Vagina (tissue), 2 donors: ENCODE measurements at regions of chr18 and their contacts with region 1.

Region 1: GRCh38 chr18:9849407-9850281 is 36.1 kb upstream of the TXNDC2 start:
- DNase-seq: no peak
- H3K4me3 ChIP-seq: no peak overlapping the region
- H3K27ac ChIP-seq: peak overlapping the region; percentile 36
- H3K4me1 ChIP-seq: peaks cover 63% of the 10 kb centered on the region
- H3K27me3 ChIP-seq: no peaks in the 10 kb centered on the region
- CTCF ChIP-seq: no peak
- POLR2A ChIP-seq: no peak

Region 2: DNA sequence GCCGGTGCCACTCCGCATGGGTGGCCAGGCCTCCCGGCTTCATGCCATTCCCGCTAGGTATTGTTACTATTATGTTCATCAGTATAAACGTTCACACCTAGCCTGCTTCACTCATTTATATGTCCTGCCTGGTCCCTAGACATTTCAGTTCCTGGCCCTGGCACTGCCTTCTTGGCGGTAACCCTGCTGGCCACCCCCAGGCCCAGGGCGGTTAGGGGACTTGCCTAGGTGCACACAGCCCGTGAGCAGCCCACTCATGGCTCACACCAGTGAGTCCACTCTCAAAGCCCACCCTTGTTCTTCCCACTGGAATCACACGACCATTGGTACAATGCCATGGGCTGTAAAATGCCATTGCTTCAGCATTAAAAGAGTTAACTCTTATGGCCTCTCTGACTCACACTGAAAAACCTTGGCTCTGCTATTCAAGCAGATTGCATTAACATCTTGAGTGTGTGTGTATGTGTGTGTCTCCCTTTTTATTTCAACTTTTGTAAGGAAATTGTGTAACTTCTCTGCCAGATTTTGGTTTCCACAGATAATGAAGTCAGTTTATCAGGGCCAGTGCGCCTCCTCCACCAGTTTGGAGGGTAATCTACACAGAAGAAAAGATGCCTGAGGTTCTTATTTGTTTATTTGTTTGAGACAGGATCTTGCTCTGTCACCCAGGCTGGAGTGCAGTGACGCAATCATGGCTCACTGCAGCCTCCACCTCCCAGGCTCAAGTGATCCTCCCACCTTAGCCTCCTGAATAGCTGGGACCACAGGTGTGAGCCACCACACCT is 67.4 kb before region 1 on chr18:
- intact Hi-C with region 1: no loop called
- DNase-seq: no peak
- H3K4me3 ChIP-seq: no peak overlapping the region
- H3K27ac ChIP-seq: peak overlapping the region; percentile 53
- H3K4me1 ChIP-seq: peaks cover 14% of the 10 kb centered on the region
- H3K27me3 ChIP-seq: no peaks in the 10 kb centered on the region
- CTCF ChIP-seq: no peak
- POLR2A ChIP-seq: no peak

Region 3: GRCh38 chr18:9792565-9793245 is 56.9 kb before region 1 on chr18:
- intact Hi-C with region 1: loop called (anchors 10 kb)
- DNase-seq: no peak
- H3K4me3 ChIP-seq: no peak overlapping the region
- H3K27ac ChIP-seq: no peak overlapping the region
- H3K4me1 ChIP-seq: peaks cover 5% of the 10 kb centered on the region
- H3K27me3 ChIP-seq: no peaks in the 10 kb centered on the region
- CTCF ChIP-seq: no peak
- POLR2A ChIP-seq: no peak

Region 4: GRCh38 chr18:9987931-9988330 is 138.3 kb after region 1 on chr18:
- intact Hi-C with region 1: no loop called
- DNase-seq: peak in 1 of 2 donors; percentile 70
- H3K4me3 ChIP-seq: no peak overlapping the region
- H3K27ac ChIP-seq: no peak overlapping the region
- H3K4me1 ChIP-seq: peaks cover 2% of the 10 kb centered on the region
- H3K27me3 ChIP-seq: no peaks in the 10 kb centered on the region
- CTCF ChIP-seq: no peak
- POLR2A ChIP-seq: no peak

Region 5: GRCh38 chr18:10015941-10016819 is 166.5 kb after region 1 on chr18:
- intact Hi-C with region 1: no loop called
- DNase-seq: no peak
- H3K4me3 ChIP-seq: no peak overlapping the region
- H3K27ac ChIP-seq: peak overlapping the region; percentile 74
- H3K4me1 ChIP-seq: peaks cover 34% of the 10 kb centered on the region
- H3K27me3 ChIP-seq: no peaks in the 10 kb centered on the region
- CTCF ChIP-seq: no peak
- POLR2A ChIP-seq: no peak